BJ (cell line): ENCODE measurements at regions of chr7 and their contacts with region 1.

Region 1: GRCh38 chr7:105887569-105888189 is 11.3 kb upstream of the ATXN7L1 start:
- DNase-seq: no peak
- H3K4me3 ChIP-seq: no peak overlapping the region
- H3K27me3 ChIP-seq: no peaks in the 10 kb centered on the region
- CTCF ChIP-seq: no peak

Region 2: DNA sequence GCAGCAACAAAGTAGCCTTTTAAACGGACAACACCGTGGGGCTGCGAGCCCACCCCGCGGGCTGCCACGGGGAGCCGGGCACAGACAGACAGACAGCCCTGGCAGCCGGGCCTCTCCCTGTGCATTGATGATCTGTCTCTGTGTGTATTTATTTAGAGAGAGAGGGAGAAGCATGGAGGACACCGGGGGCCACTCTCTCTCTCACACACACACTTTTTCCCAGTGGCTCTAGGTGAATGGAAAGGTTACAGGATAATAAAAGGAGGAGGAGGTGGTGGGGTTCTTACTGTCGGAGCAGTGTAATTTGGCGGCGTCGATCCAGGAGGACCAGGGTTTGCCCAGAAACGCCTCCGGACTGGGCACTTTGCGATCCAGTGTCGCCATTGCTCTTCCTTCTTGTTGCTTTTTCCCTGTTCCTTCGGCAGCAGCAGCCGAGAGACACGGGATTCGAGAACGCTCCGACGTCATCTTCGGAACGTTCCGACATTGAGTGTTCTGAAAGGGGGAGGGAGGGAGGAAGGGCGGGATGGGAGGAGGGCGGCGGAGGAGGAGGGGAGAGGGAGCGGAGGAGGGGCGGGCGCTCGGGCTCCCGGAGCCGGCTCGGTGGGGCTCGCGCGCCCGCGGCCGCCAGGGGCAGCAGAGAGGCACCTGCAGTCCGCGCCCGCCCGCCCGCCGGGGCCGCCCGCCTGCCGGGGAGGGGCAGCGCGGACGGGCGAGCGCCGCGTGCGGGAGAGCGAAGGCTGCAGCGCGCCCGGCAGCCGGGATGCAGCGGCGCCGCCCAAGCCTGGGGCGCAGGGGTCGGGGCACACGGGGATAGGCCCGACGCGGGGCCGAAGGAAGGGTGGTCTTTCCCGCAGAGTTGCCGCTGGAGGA is 11.4 kb before region 1 on chr7 and contains the start of gene ATXN7L1:
- CTCF ChIA-PET with region 1: interaction called, 19 read pairs
- POLR2A ChIA-PET with region 1: no interaction called
- DNase-seq: peak; percentile 80
- H3K4me3 ChIP-seq: peak within 1 kb of the TSS; percentile 79
- H3K27me3 ChIP-seq: no peaks in the 10 kb centered on the region
- CTCF ChIP-seq: peak; percentile 23; the same call in 1 of the 2 replicates
- polyA plus RNA-seq, gene ATXN7L1: 2.7 and 4.6 TPM in 2 replicates